ENCODE measurements at regions of chr16 and their contacts with region 1.

Region 1: DNA sequence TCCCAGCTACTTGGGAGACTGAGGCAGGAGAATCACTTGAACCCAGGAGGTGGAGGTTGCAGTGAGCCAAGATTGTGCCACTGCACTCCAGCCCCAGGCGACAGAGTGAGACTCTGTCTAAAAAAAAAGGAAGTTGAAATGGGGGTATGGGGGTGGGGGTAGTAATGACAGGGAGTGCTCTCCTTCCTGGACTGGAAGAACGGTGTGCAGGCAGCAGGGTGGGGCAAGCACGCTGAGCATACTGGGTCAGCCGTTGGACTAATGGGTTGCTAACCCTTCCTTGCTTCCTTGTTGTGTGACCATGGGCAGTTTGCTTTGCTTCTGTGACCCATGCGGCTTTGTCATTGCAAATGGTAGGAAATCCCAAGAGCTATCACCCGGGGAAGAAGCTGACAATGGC is 16.5 kb downstream of the KATNIP start:
- DNase-seq: no peak
- H3K4me3 ChIP-seq: no peak overlapping the region
- H3K27ac ChIP-seq: no peak overlapping the region
- H3K4me1 ChIP-seq: no peaks in the 10 kb centered on the region
- H3K27me3 ChIP-seq: no peaks in the 10 kb centered on the region
- CTCF ChIP-seq: no peak
- POLR2A ChIP-seq: no peak

Region 2: GRCh38 chr16:27515874-27516353 is 50.5 kb before region 1 on chr16:
- intact Hi-C with region 1: loop called (anchors 5 kb)
- DNase-seq: no peak
- H3K4me3 ChIP-seq: no peak overlapping the region
- H3K27ac ChIP-seq: no peak overlapping the region
- H3K4me1 ChIP-seq: no peaks in the 10 kb centered on the region
- H3K27me3 ChIP-seq: no peaks in the 10 kb centered on the region
- CTCF ChIP-seq: peak in 1 of 4 experiments; percentile 15
- POLR2A ChIP-seq: no peak